A549 (cell line): ENCODE measurements at regions of chr1 and their contacts with region 1.

Region 1: DNA sequence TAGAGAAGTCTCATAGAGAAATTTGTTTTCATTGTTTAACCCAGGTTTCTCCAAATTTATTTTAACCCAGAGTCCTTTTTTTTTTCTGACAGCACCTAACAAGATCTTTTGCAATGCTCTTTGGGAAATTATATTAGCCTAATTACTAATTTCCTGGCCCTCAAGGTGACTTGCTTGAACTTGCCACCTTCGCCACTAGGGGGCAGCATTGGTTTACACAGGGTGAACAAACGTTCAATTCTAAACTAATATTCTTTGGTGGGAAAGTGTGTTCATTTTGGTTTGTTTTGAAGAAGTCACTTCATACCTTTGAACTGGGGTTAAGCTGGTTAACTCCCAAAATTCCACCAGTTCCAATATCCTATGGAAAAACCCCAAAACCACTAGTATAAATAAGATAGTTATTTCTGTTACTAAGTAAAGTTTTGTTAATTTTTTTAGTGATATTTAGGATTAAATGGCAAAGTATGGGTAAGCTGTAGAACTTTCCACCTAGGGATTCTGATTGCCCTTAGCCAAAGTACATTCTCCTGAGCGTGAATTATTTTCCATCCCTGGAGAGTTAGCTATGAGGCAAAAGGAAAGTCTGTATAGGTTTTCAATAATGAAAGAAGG is 13.0 kb downstream of the CCDC190 start:
- DNase-seq: peak; percentile 30 to 76
- ATAC-seq: peak in 1 of 2 experiments; percentile 76; a peak in 3 of 6 replicates
- H3K4me3 ChIP-seq: no peak overlapping the region
- H3K27ac ChIP-seq: no peak overlapping the region
- H3K4me1 ChIP-seq: no peaks in the 10 kb centered on the region
- CTCF ChIP-seq: peak; percentile 90
- EP300 ChIP-seq: no peak
- POLR2A ChIP-seq: no peak
- RAD21 ChIP-seq: peak; percentile 77 to 83

Region 2: GRCh38 chr1:162835157-162835899 is 12.6 kb before region 1 on chr1:
- CTCF ChIA-PET with region 1: interaction called, 11 read pairs
- POLR2A ChIA-PET with region 1: no interaction called
- DNase-seq: no peak
- ATAC-seq: no peak
- H3K4me3 ChIP-seq: no peak overlapping the region
- H3K27ac ChIP-seq: no peak overlapping the region
- H3K4me1 ChIP-seq: no peaks in the 10 kb centered on the region
- CTCF ChIP-seq: no peak
- EP300 ChIP-seq: no peak
- POLR2A ChIP-seq: no peak
- RAD21 ChIP-seq: no peak

Region 3: GRCh38 chr1:162878000-162878596 is 30.2 kb after region 1 on chr1:
- CTCF ChIA-PET with region 1: no interaction called
- POLR2A ChIA-PET with region 1: no interaction called
- DNase-seq: peak in 1 of 2 experiments; percentile 47
- ATAC-seq: peak in 1 of 2 experiments; percentile 75; a peak in 3 of 6 replicates
- H3K4me3 ChIP-seq: no peak overlapping the region
- H3K27ac ChIP-seq: no peak overlapping the region
- H3K4me1 ChIP-seq: no peaks in the 10 kb centered on the region
- CTCF ChIP-seq: peak; percentile 32; the same call in 2 of the 3 replicates
- EP300 ChIP-seq: no peak
- POLR2A ChIP-seq: no peak
- RAD21 ChIP-seq: peak; percentile 49 to 79; a peak in 4 of 5 replicates

Region 4: GRCh38 chr1:163202833-163203451 is 355.0 kb after region 1 on chr1 and contains the start of gene RGS5:
- CTCF ChIA-PET with region 1: no interaction called
- POLR2A ChIA-PET with region 1: no interaction called
- DNase-seq: no peak
- ATAC-seq: peak; percentile 24 to 38; a peak in 3 of 6 replicates
- H3K4me3 ChIP-seq: no peak within 1 kb of the TSS
- H3K27ac ChIP-seq: no peak within 1 kb of the TSS
- H3K4me1 ChIP-seq: no peaks in the 10 kb centered on the region
- CTCF ChIP-seq: no peak
- EP300 ChIP-seq: no peak
- POLR2A ChIP-seq: no peak
- RAD21 ChIP-seq: no peak
- polyA plus RNA-seq, gene RGS5: 6.5 TPM in 2 replicates